ENCODE measurements at regions of chr2 and their contacts with region 1.

Region 1: GRCh38 chr2:179264368-179265081 is at the start of gene SESTD1:
- DNase-seq: peak; percentile 61
- H3K4me3 Mint-ChIP-seq: peak within 1 kb of the TSS; percentile 86
- H3K27ac Mint-ChIP-seq: peak within 1 kb of the TSS; percentile 74
- H3K4me1 Mint-ChIP-seq: peaks cover 18% of the 10 kb centered on the region
- H3K27me3 Mint-ChIP-seq: peaks cover 36% of the 10 kb centered on the region
- total RNA-seq, gene SESTD1: 9.8 and 14.3 TPM in 2 replicates

Region 2: GRCh38 chr2:179240481-179241451 is 23.8 kb before region 1 on chr2:
- intact Hi-C with region 1: loop called (anchors 2 kb)
- DNase-seq: no peak
- H3K4me3 Mint-ChIP-seq: no peak overlapping the region
- H3K27ac Mint-ChIP-seq: peak overlapping the region; percentile 15
- H3K4me1 Mint-ChIP-seq: peaks cover 26% of the 10 kb centered on the region
- H3K27me3 Mint-ChIP-seq: no peaks in the 10 kb centered on the region

Region 3: DNA sequence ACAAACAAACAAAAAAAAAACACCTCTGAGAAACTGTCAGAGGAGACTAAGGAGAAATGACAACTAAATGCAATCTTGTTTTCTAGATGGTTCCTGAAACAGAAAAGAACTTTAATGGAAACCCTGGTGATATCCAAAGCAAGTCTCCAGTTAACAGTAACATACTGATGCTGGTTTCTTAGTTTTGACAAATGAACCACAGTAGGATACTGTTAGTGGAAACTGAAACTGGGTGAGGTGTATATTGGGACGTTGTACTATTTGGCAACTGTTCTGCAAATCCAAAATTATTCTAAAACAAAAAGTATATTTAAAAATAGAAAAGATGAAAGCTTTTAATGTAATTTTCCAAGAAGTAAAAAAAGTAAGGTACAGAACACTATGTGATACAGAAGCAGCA is 11.3 kb before region 1 on chr2:
- intact Hi-C with region 1: loop called (anchors 2 kb)
- DNase-seq: no peak
- H3K4me3 Mint-ChIP-seq: no peak overlapping the region
- H3K27ac Mint-ChIP-seq: no peak overlapping the region
- H3K4me1 Mint-ChIP-seq: peaks cover 51% of the 10 kb centered on the region
- H3K27me3 Mint-ChIP-seq: peaks cover 4% of the 10 kb centered on the region

Region 4: DNA sequence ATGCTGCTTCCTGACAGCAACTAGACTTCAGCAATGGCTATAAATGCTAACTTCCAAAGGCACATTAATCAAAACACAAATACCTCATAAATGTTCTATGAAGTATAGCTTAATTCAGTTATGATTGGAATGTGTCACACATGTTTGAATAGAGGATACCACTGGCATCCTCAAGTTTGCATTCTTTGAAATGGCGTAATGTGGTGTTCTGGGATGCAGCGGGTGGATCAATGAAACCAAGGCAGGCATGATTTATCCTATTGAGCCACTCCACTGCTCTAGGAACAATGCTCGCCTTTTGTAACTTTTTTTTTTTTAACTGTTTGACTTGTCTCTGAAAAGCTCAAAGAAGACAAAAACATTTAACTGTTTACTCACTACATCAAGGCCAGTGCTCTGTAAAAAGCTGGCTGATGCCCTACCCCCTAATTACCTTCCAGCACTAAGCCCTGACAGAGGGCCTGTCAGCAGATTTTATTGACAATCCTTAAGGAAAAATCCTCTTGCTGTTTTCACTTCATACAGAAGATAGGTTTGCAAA is 278.9 kb after region 1 on chr2:
- intact Hi-C with region 1: no loop called
- DNase-seq: no peak
- H3K4me3 Mint-ChIP-seq: no peak overlapping the region
- H3K27ac Mint-ChIP-seq: no peak overlapping the region
- H3K4me1 Mint-ChIP-seq: no peaks in the 10 kb centered on the region
- H3K27me3 Mint-ChIP-seq: no peaks in the 10 kb centered on the region

Measured in activated T-helper 2 cell treated with anti-CD3 and anti-CD28 coated beads, Interferon-gamma antibody, Interleukin-2, Interleukin-4, amounts not matched to agents 10 μg/mL and 5 μg/mL and 100 μg/mL, durations not matched to agents 14 hours and 24 hours and 36 hours (primary cell).